Calu3 (cell line): ENCODE measurements at regions of chr14 and their contacts with region 1.

Region 1: GRCh38 chr14:29607169-29607568 is 320.5 kb downstream of the PRKD1 start:
- DNase-seq: no peak
- H3K4me3 Mint-ChIP-seq: no peak overlapping the region
- H3K27ac Mint-ChIP-seq: no peak overlapping the region
- H3K4me1 Mint-ChIP-seq: peaks cover 12% of the 10 kb centered on the region
- H3K27me3 Mint-ChIP-seq: no peaks in the 10 kb centered on the region
- CTCF ChIP-seq: no peak

Region 2: GRCh38 chr14:27890259-27890658 is 1716.9 kb before region 1 on chr14:
- CTCF ChIA-PET with region 1: no interaction called
- intact Hi-C with region 1: loop called (anchors 5 kb)
- DNase-seq: no peak
- H3K4me3 Mint-ChIP-seq: no peak overlapping the region
- H3K27ac Mint-ChIP-seq: no peak overlapping the region
- H3K4me1 Mint-ChIP-seq: no peaks in the 10 kb centered on the region
- H3K27me3 Mint-ChIP-seq: no peaks in the 10 kb centered on the region
- CTCF ChIP-seq: no peak

Region 3: GRCh38 chr14:29630566-29631160 is 23.5 kb after region 1 on chr14:
- CTCF ChIA-PET with region 1: no interaction called
- intact Hi-C with region 1: no loop called
- DNase-seq: no peak
- H3K4me3 Mint-ChIP-seq: no peak overlapping the region
- H3K27ac Mint-ChIP-seq: no peak overlapping the region
- H3K4me1 Mint-ChIP-seq: no peaks in the 10 kb centered on the region
- H3K27me3 Mint-ChIP-seq: no peaks in the 10 kb centered on the region
- CTCF ChIP-seq: no peak

Region 4: DNA sequence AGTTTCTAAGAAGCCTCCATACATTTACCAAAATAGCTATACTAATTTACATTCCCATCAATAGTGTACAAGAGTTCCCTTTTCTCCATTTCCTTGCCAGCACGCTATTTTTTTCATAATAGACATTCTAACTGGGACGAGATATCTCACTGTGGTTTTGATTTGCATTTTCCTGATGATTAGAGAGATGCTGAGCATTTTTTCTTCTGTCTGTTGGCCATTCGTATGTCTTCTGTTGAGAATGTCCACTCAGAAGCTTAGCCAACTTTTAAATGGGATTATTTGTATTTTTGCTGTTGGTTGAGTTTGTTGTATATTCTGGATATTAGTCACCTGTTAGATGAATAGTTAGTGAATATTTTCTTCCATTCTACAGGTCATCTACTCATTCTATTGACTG is 176.4 kb after region 1 on chr14:
- CTCF ChIA-PET with region 1: no interaction called
- intact Hi-C with region 1: no loop called
- DNase-seq: no peak
- H3K4me3 Mint-ChIP-seq: no peak overlapping the region
- H3K27ac Mint-ChIP-seq: no peak overlapping the region
- H3K4me1 Mint-ChIP-seq: no peaks in the 10 kb centered on the region
- H3K27me3 Mint-ChIP-seq: no peaks in the 10 kb centered on the region
- CTCF ChIP-seq: no peak